Activated naive CD8-positive, alpha-beta T cell treated with anti-CD3 and anti-CD28 coated beads, Interleukin-2, amount 10 ng/mL, durations not matched to agents 7 days and 5 days (primary cell): ENCODE measurements at regions of chr22 and their contacts with region 1.

Region 1: GRCh38 chr22:29553351-29554224 is at the start of gene THOC5:
- DNase-seq: peak; percentile 89
- ATAC-seq: peak; percentile 94
- H3K4me3 Mint-ChIP-seq: peak within 1 kb of the TSS; percentile 97
- H3K27ac Mint-ChIP-seq: peak within 1 kb of the TSS; percentile 90
- H3K4me1 Mint-ChIP-seq: peaks cover 19% of the 10 kb centered on the region
- H3K27me3 Mint-ChIP-seq: no peaks in the 10 kb centered on the region
- total RNA-seq, gene THOC5: 57.8 to 58.9 TPM

Region 2: GRCh38 chr22:29216873-29217666 is 336.5 kb before region 1 on chr22:
- POLR2A ChIA-PET with region 1: no interaction called
- DNase-seq: no peak
- ATAC-seq: no peak
- H3K4me3 Mint-ChIP-seq: no peak overlapping the region
- H3K27ac Mint-ChIP-seq: no peak overlapping the region
- H3K4me1 Mint-ChIP-seq: no peaks in the 10 kb centered on the region
- H3K27me3 Mint-ChIP-seq: peaks cover 5% of the 10 kb centered on the region

Region 3: GRCh38 chr22:29536411-29536810 is 17.2 kb before region 1 on chr22:
- POLR2A ChIA-PET with region 1: no interaction called
- DNase-seq: no peak
- ATAC-seq: no peak
- H3K4me3 Mint-ChIP-seq: no peak overlapping the region
- H3K27ac Mint-ChIP-seq: no peak overlapping the region
- H3K4me1 Mint-ChIP-seq: no peaks in the 10 kb centered on the region
- H3K27me3 Mint-ChIP-seq: no peaks in the 10 kb centered on the region

Region 4: DNA sequence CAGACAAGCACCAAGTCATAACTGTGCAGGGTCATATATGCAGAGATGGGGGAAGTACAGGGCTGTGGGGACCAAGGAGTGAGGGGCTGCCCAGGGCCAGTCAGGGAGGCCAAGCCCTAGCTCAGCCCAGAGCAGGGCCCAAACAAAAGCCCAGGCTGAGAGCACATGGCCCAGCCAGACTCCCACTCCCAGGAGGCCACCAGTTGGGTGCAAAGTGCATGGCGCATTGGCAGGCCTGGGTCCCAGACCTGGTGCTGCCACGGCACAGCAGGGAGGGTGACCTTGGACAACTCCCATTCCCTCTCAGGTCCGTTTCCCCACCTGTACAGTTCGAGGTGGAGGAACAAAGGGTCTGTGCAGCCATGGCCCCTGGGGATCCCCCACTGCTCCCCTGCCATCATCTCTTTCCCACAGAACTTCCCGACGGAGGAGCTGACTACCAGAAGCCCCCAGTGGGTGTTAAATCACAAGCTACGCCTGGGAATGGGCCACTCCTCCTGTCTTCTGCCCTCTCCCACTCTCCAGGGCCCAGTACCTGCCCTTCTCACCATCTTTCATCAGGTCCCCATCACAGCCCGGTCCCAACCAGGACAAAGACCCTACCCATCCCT is 26.7 kb after region 1 on chr22:
- POLR2A ChIA-PET with region 1: interaction called, 21 read pairs
- DNase-seq: peak; percentile 38
- ATAC-seq: peak; percentile 4
- H3K4me3 Mint-ChIP-seq: peak overlapping the region; percentile 96
- H3K27ac Mint-ChIP-seq: peak overlapping the region; percentile 95
- H3K4me1 Mint-ChIP-seq: peaks cover 13% of the 10 kb centered on the region
- H3K27me3 Mint-ChIP-seq: no peaks in the 10 kb centered on the region